ENCODE measurements at regions of chr18 and their contacts with region 1.

Region 1: GRCh38 chr18:7467710-7468466 is 99.2 kb upstream of the PTPRM start:
- DNase-seq: no peak
- H3K4me3 ChIP-seq: no peak overlapping the region
- H3K27ac ChIP-seq: no peak overlapping the region
- H3K4me1 ChIP-seq: no peaks in the 10 kb centered on the region
- H3K27me3 ChIP-seq: no peaks in the 10 kb centered on the region
- CTCF ChIP-seq: no peak
- POLR2A ChIP-seq: no peak

Region 2: DNA sequence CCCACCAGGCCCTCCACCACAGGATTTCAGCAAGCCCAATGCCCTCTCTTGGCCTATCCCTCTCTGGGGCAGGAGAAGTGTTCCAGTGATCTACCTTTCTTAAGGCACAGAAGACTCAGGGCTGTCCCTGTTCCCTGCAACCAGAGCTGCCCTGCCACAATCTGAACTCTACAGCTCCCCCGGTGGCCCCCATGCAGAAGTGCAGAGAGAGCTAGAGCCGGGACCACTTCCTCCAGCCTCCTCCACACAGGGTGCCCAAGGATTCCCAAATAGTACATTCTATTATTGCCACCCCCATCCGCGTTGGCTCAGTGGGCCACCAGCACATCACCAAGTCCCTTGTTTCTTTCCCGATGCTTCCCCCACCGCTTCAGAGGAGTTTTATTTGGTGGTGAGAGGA is 15.6 kb before region 1 on chr18:
- CTCF ChIA-PET with region 1: interaction called, 13 read pairs
- POLR2A ChIA-PET with region 1: no interaction called
- dilution Hi-C with region 1: no loop called
- intact Hi-C with region 1: no loop called
- DNase-seq: peak; percentile 32
- H3K4me3 ChIP-seq: no peak overlapping the region
- H3K27ac ChIP-seq: no peak overlapping the region
- H3K4me1 ChIP-seq: no peaks in the 10 kb centered on the region
- H3K27me3 ChIP-seq: peaks cover 2 to 4% of the 10 kb centered on the region in 2 experiments
- CTCF ChIP-seq: peak; percentile 61 to 80
- POLR2A ChIP-seq: no peak

Measured in endothelial cell of umbilical vein (primary cell).